Esophagus squamous epithelium (tissue), 5 donors: ENCODE measurements at regions of chr3 and their contacts with region 1.

Region 1: GRCh38 chr3:124084022-124084881 is 92.3 kb upstream of the ROPN1 start:
- DNase-seq: no peak
- H3K4me3 ChIP-seq: no peak overlapping the region
- H3K27ac ChIP-seq: peak overlapping the region in 2 of 4 donors; percentile 31 to 66
- H3K4me1 ChIP-seq: peaks cover 0 to 8% (median 8%) of the 10 kb centered on the region in 3 donors
- H3K27me3 ChIP-seq: no peaks in the 10 kb centered on the region
- CTCF ChIP-seq: no peak
- POLR2A ChIP-seq: no peak

Region 2: GRCh38 chr3:123914820-123915219 is 169.4 kb before region 1 on chr3:
- intact Hi-C with region 1: no loop called
- DNase-seq: no peak
- H3K4me3 ChIP-seq: no peak overlapping the region
- H3K27ac ChIP-seq: no peak overlapping the region
- H3K4me1 ChIP-seq: no peaks in the 10 kb centered on the region
- H3K27me3 ChIP-seq: no peaks in the 10 kb centered on the region
- CTCF ChIP-seq: no peak
- POLR2A ChIP-seq: no peak

Region 3: DNA sequence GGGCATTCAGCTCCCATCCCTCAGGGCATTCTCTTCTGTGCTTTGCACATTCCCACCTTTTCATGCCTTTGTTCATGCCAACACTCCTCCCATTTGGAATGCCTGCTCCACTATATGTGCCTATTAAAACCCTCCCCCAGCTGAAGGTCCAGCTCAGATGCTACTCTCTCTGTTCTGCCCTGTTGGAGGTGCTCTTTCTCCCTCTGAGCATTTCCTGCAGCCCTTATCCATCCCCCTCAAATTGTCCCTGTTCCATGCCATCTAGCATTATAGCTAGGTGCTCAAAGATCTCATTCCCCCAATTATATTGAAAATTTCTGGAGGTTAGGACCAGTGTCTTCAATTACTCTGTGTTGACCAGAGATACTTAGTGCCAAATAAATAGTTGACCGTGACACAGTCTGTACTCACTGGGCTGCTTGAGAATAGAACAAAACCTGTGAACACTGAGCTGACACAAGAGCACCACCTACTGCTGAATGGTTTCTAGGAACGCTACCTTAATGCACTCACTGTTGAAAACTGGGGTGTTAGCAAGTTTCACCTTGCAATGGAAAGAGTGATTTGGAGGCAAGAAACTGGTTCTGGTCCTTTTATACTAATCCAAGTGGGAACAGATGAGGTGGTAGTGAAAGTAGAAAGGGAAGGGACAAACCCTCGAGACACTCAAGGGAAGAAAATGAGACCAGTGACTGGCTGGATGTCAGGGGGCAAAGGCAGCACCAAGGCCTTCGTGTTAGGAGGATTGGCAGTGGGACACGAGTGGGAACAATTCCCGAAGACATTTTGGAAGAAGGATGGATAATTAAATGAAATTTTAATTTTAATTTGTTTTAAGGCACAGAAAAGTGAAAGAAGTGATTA is 197.4 kb after region 1 on chr3:
- intact Hi-C with region 1: loop called (anchors 5 kb)
- DNase-seq: no peak
- H3K4me3 ChIP-seq: no peak overlapping the region
- H3K27ac ChIP-seq: peak overlapping the region in 2 of 4 donors; percentile 4 to 44
- H3K4me1 ChIP-seq: peaks cover 0 to 30% (median 9%) of the 10 kb centered on the region in 3 donors
- H3K27me3 ChIP-seq: no peaks in the 10 kb centered on the region
- CTCF ChIP-seq: peak in 5 of 6 experiments; percentile 32 to 63 (median 43)
- POLR2A ChIP-seq: no peak